ENCODE measurements at regions of chr15 and their contacts with region 1.

Region 1: DNA sequence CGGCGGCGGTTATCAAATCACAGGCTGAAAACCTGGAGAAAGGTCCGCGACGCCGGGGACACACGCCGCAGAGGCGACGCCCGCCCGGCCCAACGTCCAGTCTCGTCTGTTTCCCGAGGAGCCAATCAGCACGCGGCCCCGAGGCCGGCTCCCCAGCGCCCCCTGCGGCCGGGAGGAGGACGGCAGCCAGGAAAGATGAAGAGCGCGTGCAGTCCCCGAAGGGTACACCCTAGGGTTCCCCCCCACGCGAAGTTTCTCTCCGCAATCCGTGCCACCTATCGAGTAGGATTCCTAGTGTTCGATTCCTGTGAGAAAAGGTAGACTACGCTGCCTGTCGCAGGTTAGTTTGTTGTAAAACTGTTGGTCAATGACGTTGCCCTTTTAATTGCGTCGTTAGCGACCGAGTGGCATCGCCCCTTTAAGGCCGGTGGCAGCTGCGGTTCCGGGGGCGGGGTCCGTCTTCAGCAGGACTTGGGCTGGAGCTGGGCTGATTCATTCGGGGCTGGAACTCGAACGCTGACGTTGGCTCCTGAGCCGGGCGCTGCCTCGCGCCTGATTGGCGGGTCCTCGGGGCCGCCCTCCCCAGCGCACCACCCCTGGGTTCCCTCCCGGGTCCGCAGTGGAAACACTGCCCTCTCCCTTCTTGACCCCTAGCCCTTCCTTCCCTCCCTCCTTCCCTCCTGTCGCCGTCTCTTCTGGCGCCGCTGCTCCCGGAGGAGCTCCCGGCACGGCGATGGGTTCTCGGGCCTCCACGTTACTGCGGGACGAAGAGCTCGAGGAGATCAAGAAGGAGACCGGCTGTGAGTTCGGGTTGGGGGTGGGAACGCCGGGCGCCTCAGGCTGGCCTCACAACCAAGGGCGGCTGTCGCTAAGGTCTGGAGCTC is at the starts of genes CHP1 and EXD1:
- DNase-seq: peak; percentile 98
- ATAC-seq: peak; percentile 99 to 100 (median 100)
- H3K4me3 ChIP-seq: peak within 1 kb of the TSS; percentile 68 to 98 (median 82)
- H3K27ac ChIP-seq: peak within 1 kb of the TSS; percentile 85 to 96 (median 90)
- H3K4me1 ChIP-seq: peaks cover 0 to 33% (median 26%) of the 10 kb centered on the region in 9 donors
- H3K27me3 ChIP-seq: no peaks in the 10 kb centered on the region
- CTCF ChIP-seq: peak; percentile 95 to 99 (median 97)
- total RNA-seq, gene CHP1: 86.5 to 133 (median 120) TPM
- total RNA-seq, gene EXD1: not detected

Region 2: DNA sequence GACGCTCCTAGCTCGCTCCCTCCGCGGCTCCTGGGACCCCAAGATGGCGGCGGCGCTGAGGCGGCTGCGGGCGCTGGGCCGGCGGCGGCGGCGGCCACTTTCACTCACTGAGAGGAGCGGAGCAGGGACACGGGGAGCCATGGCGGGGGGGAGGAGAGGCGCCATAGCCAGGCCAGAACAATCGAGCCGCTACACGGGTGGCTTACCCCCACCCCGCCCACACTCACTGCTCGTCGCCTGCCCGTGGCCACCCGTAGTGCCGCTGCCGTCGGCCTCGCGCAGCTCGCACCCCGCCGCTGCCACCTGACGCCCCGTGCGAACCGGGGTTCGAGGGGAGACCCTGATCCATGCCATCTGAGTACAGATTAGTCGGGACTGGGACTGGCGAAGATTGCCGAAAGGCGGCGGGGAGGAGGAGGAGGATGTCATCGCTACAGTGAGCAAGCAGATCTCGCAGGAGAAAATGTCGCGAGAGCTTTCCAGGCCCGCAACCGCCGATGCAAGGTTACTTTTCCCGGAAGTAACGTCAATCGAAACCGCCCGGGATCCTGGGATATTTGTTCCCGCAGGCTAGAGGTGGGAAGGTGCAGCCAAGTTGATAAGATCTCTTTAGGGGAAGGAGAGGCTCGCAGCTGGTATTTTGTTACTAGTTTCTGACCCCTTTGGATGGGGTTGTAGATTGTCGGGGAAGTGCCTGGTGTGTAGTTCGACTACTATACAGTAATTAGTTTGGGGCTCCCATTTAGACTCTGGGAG is 114.6 kb before region 1 on chr15 and contains the start of gene INO80:
- intact Hi-C with region 1: loop called in 4 of 10 experiments (anchors 1 to 10 kb)
- DNase-seq: peak; percentile 96 to 99
- ATAC-seq: peak; percentile 95 to 98 (median 97)
- H3K4me3 ChIP-seq: peak within 1 kb of the TSS; percentile 43 to 97 (median 82)
- H3K27ac ChIP-seq: peak within 1 kb of the TSS; percentile 96 to 100 (median 100)
- H3K4me1 ChIP-seq: peaks cover 0 to 38% (median 21%) of the 10 kb centered on the region in 9 donors
- H3K27me3 ChIP-seq: peaks cover 0 to under 1% (median 0%) of the 10 kb centered on the region in 7 donors
- CTCF ChIP-seq: peak in 1 of 9 donors; percentile 17
- total RNA-seq, gene INO80: 10.0 to 14.8 (median 12.2) TPM

Region 3: DNA sequence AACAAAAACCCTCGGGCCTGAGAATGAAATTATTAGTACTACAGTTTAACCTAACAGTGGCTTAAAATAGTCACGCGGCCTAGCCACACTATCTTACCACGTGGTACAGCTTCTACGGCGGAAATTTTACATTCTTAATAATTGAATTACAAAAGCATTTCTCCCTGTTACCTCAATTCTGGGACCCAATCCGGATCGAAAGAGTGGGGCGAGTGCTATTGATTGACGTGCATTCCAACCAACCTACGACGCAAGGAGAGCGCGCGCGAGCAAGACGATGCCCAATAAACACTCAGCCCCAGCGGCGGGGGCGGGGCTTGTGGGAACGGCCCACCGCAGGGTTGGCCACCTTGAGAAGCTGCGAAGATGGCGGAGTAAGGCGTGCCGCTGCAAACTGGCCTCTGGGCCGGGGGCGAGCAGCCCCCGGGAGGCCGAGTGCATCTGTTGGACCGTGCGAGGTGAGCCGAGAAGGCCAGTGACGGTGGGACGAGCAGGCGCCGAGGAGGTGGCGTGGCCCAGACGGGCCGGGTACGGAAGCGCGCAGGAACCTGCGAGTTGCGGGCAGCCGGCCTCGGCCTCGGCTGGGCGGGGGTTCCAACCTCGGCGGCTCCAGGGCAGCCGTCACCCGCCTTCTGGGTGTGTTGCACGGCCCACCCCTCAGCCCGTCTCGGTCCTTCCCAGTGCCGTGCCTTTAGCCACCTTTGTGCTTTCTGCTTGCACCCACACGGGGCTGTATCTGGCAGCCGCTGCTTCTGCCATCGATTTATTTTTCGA is 52.9 kb after region 1 on chr15:
- intact Hi-C with region 1: loop called in 4 of 10 experiments (anchors 1 to 5 kb)
- DNase-seq: peak; percentile 96 to 99
- ATAC-seq: peak; percentile 98 to 100 (median 100)
- H3K4me3 ChIP-seq: peak overlapping the region; percentile 66 to 96 (median 82)
- H3K27ac ChIP-seq: peak overlapping the region; percentile 86 to 99 (median 94)
- H3K4me1 ChIP-seq: peaks cover 0 to 48% (median 33%) of the 10 kb centered on the region in 9 donors
- H3K27me3 ChIP-seq: no peaks in the 10 kb centered on the region
- CTCF ChIP-seq: no peak